ENCODE measurements at regions of chr13 and their contacts with region 1.

Region 1: DNA sequence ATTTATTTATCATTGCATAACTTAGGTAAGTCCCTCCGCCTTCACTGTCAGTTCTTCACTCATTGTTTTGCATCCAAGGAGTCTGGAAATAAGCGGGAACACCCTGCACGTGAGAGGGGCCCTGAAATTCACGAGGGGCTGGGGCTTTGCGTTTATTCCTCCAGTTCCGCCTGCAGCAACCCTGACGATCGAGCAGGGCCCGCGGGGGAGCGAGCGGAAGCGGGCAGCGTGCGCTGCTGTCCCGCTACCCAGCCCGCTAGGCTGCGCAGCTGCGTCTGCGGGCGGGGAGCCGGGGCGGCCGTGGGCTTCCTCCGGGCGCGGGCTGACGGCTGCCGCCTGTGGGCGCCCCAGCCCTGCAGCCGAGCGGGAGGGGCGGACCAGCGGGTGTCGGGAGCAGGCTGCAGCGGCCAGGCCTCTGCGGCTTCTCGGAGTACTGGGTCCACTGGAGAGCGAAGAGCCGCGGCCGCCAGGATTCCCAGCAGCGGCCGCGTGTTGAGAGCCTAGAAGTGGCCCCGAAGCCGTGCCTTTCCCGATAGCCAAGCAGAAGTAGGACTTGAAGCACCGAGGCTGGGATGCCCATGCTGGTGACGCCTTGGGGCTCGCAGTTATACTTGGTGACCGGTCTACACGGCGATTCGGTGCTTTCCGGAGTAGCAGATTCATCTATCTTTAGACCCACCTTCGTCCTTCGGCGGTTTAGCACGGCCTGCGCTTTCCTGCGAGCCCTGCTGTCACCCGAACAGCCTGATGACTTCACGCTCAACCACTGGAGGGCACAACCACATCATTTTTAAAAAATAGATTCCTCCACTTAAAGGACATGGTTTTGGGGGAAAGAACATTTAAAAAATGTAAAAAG is 32.9 kb upstream of the SACS start:
- DNase-seq: peak; percentile 92
- H3K4me3 ChIP-seq: peak overlapping the region; percentile 57 to 69 (median 60)
- H3K27ac ChIP-seq: peak overlapping the region; percentile 74 to 89 (median 86)
- H3K4me1 ChIP-seq: peaks cover 5 to 47% (median 37%) of the 10 kb centered on the region in 4 donors
- H3K27me3 ChIP-seq: no peaks in the 10 kb centered on the region
- CTCF ChIP-seq: peak; percentile 45 to 67 (median 64)
- EP300 ChIP-seq: no peak
- POLR2A ChIP-seq: no peak

Region 2: GRCh38 chr13:23579072-23579895 is 112.9 kb after region 1 on chr13:
- intact Hi-C with region 1: loop called (anchors 2 kb)
- DNase-seq: peak; percentile 96
- H3K4me3 ChIP-seq: peak overlapping the region; percentile 85 to 97 (median 92)
- H3K27ac ChIP-seq: peak overlapping the region; percentile 85 to 95 (median 88)
- H3K4me1 ChIP-seq: peaks cover 0 to 31% (median 19%) of the 10 kb centered on the region in 4 donors
- H3K27me3 ChIP-seq: peaks cover 0 to 3% (median 0%) of the 10 kb centered on the region in 4 donors
- CTCF ChIP-seq: no peak
- EP300 ChIP-seq: no peak
- POLR2A ChIP-seq: no peak

Measured in esophagus muscularis mucosa (tissue), 4 donors.